GM10248 (cell line): ENCODE measurements at regions of chr1 and their contacts with region 1.

Region 1: GRCh38 chr1:203486618-203487370 is 7.2 kb upstream of the OPTC start:
- DNase-seq: no peak
- CTCF ChIP-seq: no peak

Region 2: GRCh38 chr1:203127666-203128430 is 358.9 kb before region 1 on chr1 and contains the start of gene ADORA1:
- CTCF ChIA-PET with region 1: no interaction called
- POLR2A ChIA-PET with region 1: no interaction called
- DNase-seq: no peak
- CTCF ChIP-seq: no peak

Region 3: GRCh38 chr1:203326830-203327683 is 159.7 kb before region 1 on chr1:
- CTCF ChIA-PET with region 1: interaction called, 27 read pairs
- POLR2A ChIA-PET with region 1: no interaction called
- DNase-seq: peak; percentile 95
- CTCF ChIP-seq: peak; percentile 1

Region 4: GRCh38 chr1:203454986-203455471 is 31.8 kb before region 1 on chr1:
- CTCF ChIA-PET with region 1: interaction called, 11 read pairs
- POLR2A ChIA-PET with region 1: no interaction called
- DNase-seq: no peak
- CTCF ChIP-seq: no peak

Region 5: DNA sequence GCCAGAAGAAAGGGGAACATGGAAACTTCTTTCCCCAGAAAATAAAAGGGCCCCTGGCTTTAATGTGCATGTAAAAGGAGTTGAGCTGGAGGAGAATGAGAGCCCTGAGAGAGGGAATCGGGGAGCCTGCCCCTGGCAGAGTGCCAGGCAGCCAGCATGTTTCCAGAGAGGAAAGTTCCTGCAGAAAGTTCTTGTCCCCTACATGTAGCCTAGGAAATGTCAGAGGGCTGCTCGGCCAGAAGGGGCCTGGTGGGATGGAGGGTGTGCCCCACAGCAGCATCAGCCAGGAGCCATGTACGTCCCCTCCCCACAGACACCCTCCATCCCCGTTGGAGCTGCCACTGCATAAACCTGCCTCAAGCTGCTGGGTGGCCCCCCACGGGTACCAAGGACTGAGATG is 16.6 kb before region 1 on chr1:
- CTCF ChIA-PET with region 1: interaction called, 75 read pairs
- POLR2A ChIA-PET with region 1: no interaction called
- DNase-seq: no peak
- CTCF ChIP-seq: no peak

Region 6: DNA sequence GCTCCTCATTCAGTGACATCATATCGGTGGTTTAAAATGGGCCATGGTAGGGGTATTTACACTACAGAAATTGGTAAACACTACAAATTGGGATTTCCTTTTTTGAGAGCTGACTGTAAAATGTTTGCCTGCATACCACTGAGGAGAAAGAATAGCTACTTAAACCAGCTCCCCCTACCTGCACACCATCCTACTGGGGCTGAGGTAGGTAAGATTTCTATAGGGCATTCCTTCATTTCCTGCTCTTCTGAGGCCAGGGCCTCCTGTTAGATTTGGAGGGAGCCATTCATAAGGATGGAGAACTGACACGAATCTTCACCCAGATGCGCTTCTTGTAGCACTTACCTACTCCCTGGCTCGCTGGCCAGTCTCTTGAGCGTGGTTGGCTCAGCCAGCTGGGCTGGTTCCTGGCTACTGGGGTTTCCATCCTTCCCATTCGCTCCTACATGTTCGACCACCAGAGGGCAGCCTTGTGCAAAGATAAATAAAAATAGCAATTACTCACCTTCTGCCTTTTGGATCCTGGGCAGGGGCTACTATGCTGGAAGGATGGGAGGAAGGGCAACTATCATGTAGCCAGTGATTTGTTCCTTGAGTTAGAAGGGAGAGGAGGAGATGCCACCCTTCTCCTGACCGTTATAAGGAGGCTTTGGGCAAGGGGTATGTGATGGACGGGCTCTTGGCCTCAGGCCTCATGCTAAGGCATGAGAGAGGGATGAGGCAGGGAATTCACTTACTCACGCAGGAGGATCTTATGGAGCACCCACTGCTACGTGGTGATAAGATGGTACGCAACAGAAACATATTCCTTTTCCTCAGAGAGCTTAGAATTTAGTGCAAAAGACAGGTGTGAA is 17.8 kb after region 1 on chr1:
- CTCF ChIA-PET with region 1: interaction called, 15 read pairs
- POLR2A ChIA-PET with region 1: no interaction called
- DNase-seq: peak; percentile 82
- CTCF ChIP-seq: peak; percentile 84